Activated B cell treated with CpG ODN at 0.5 μM for 24 hours (primary cell): ENCODE measurements at regions of chr7 and their contacts with region 1.

Region 1: DNA sequence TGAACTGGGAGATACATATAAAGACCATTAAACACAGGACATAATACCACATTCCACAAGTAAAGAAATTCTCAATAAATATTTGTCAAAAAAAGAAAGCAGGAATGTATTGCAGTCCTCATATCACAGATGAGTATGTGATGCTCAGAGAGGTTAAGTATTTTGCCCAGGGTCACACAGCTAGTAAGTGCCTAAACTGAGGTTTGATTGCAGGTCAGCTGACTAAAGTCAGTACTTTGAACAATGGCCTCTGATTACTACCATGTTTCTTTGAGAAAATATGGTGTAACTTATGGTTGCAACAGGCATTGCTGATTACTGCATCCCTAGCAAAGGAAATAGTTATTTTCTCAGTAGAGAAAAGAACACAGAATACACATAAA is 267.1 kb downstream of the ELMO1 start:
- DNase-seq: no peak
- ATAC-seq: no peak
- H3K4me3 Mint-ChIP-seq: no peak overlapping the region
- H3K27ac Mint-ChIP-seq: no peak overlapping the region
- H3K4me1 Mint-ChIP-seq: no peaks in the 10 kb centered on the region
- H3K27me3 Mint-ChIP-seq: no peaks in the 10 kb centered on the region
- CTCF ChIP-seq: no peak

Region 2: GRCh38 chr7:36440880-36441279 is 740.7 kb before region 1 on chr7:
- CTCF ChIA-PET with region 1: interaction called, 68 read pairs
- POLR2A ChIA-PET with region 1: no interaction called
- intact Hi-C with region 1: loop called (anchors 1 kb)
- DNase-seq: no peak
- ATAC-seq: no peak
- H3K4me3 Mint-ChIP-seq: no peak overlapping the region
- H3K27ac Mint-ChIP-seq: no peak overlapping the region
- H3K4me1 Mint-ChIP-seq: no peaks in the 10 kb centered on the region
- H3K27me3 Mint-ChIP-seq: no peaks in the 10 kb centered on the region
- CTCF ChIP-seq: no peak

Region 3: DNA sequence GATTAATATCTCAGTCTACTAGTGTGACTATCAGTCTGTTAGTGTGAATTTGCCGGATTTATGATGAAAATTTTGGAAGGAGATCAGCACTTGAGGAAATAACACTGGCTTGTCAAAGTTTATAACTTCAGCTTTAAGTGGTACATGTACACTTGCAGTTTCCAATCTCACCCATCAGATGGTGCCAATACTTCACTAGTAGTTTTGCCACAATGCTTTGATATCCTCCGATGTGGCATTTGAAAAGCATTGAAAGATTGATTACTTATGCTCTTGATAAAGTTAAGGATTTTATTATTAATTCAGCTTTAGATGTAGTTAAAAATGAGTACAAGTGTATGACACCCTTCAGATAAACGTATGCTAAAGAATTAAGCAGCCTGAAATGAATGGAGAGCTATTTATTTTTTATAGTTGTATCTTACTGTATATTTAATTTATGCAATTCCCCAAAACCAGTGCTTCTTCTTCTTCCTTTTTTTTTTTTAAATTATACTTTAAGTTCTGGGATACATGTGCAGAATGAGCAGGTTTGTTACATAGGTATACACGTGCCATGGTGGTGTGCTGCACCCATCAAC is 693.7 kb before region 1 on chr7:
- CTCF ChIA-PET with region 1: interaction called, 86 read pairs
- POLR2A ChIA-PET with region 1: interaction called, 13 read pairs
- intact Hi-C with region 1: loop called (anchors 1 kb)
- DNase-seq: no peak
- ATAC-seq: no peak
- H3K4me3 Mint-ChIP-seq: no peak overlapping the region
- H3K27ac Mint-ChIP-seq: no peak overlapping the region
- H3K4me1 Mint-ChIP-seq: no peaks in the 10 kb centered on the region
- H3K27me3 Mint-ChIP-seq: peaks cover 8% of the 10 kb centered on the region
- CTCF ChIP-seq: no peak

Region 4: GRCh38 chr7:36986429-36987362 is 194.8 kb before region 1 on chr7:
- CTCF ChIA-PET with region 1: interaction called, 49 read pairs
- POLR2A ChIA-PET with region 1: no interaction called
- intact Hi-C with region 1: loop called (anchors 1 kb)
- DNase-seq: peak; percentile 30
- ATAC-seq: peak; percentile 71
- H3K4me3 Mint-ChIP-seq: no peak overlapping the region
- H3K27ac Mint-ChIP-seq: no peak overlapping the region
- H3K4me1 Mint-ChIP-seq: peaks cover 33% of the 10 kb centered on the region
- H3K27me3 Mint-ChIP-seq: no peaks in the 10 kb centered on the region
- CTCF ChIP-seq: no peak

Region 5: GRCh38 chr7:37344886-37345579 is 163.5 kb after region 1 on chr7:
- CTCF ChIA-PET with region 1: no interaction called
- POLR2A ChIA-PET with region 1: no interaction called
- intact Hi-C with region 1: no loop called
- DNase-seq: no peak
- ATAC-seq: no peak
- H3K4me3 Mint-ChIP-seq: peak overlapping the region; percentile 50
- H3K27ac Mint-ChIP-seq: peak overlapping the region; percentile 86
- H3K4me1 Mint-ChIP-seq: peaks cover 79% of the 10 kb centered on the region
- H3K27me3 Mint-ChIP-seq: no peaks in the 10 kb centered on the region
- CTCF ChIP-seq: no peak